HEK293 (cell line): ENCODE measurements at regions of chr10 and their contacts with region 1.

Region 1: GRCh38 chr10:122267849-122268737 is 3.0 kb upstream of the BTBD16 start:
- H3K4me3 ChIP-seq: no peak overlapping the region
- H3K27ac ChIP-seq: no peak overlapping the region
- H3K4me1 ChIP-seq: no peaks in the 10 kb centered on the region
- CTCF ChIP-seq: peak; percentile 75

Region 2: DNA sequence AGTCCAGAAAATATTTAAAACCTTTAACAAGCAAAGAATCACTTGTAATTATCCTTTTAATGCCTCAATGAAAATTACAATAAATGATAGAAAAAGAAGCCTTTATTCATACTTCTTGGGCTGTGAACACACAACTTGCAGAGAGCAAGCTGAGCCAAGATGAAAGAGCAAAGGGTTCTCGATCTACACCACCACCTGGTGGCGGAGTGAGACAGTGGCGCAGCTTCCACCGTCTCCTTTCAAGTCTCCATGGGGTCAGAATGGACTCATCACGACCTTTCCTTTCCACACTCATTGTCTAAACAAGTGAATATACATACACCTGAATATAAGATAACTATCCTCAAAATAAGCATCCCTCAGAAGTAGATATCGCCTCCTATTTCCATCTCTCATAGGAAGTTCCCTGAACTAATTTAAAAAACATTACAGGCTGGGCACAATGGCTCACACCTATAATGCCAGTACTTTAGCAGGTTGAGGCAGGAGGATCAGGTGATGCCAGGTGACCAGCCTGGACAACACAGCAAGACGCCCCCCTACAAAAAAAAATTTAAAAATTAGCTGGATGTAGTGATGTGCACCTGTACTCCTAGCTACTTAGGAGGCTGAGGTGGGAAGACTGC is 381.0 kb before region 1 on chr10:
- CTCF ChIA-PET with region 1: no interaction called
- POLR2A ChIA-PET with region 1: no interaction called
- H3K4me3 ChIP-seq: no peak overlapping the region
- H3K27ac ChIP-seq: no peak overlapping the region
- H3K4me1 ChIP-seq: no peaks in the 10 kb centered on the region
- CTCF ChIP-seq: peak; percentile 43; the same call in 1 of the 2 replicates

Region 3: GRCh38 chr10:122051251-122051996 is 216.7 kb before region 1 on chr10:
- CTCF ChIA-PET with region 1: interaction called, 16 read pairs
- POLR2A ChIA-PET with region 1: no interaction called
- H3K4me3 ChIP-seq: no peak overlapping the region
- H3K27ac ChIP-seq: no peak overlapping the region
- H3K4me1 ChIP-seq: 0 out of 2 replicates have a peak, but pooled peaks cover under 1% of the 10 kb centered on the region
- CTCF ChIP-seq: no peak

Region 4: DNA sequence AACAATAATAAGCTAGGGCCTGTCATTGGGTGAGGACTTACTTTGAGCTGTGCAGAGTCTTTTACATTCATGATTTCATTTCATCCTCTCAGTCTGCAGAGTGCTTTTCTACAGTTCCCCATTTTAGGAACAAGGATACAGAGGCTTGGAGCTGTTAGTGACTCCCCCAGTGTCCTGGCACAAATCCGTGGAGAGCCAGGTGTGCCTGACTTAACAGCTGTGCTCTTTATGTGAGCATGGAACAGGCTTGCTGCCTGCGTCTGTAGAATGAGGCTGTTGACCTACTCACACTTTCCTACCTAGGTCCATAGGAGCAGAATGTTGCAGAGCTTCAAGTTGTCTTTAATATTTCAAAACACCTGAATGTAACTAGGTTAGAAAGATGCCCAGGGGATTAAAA is 47.4 kb before region 1 on chr10:
- CTCF ChIA-PET with region 1: interaction called, 10 read pairs
- POLR2A ChIA-PET with region 1: no interaction called
- H3K4me3 ChIP-seq: no peak overlapping the region
- H3K27ac ChIP-seq: no peak overlapping the region
- H3K4me1 ChIP-seq: no peaks in the 10 kb centered on the region
- CTCF ChIP-seq: no peak

Region 5: DNA sequence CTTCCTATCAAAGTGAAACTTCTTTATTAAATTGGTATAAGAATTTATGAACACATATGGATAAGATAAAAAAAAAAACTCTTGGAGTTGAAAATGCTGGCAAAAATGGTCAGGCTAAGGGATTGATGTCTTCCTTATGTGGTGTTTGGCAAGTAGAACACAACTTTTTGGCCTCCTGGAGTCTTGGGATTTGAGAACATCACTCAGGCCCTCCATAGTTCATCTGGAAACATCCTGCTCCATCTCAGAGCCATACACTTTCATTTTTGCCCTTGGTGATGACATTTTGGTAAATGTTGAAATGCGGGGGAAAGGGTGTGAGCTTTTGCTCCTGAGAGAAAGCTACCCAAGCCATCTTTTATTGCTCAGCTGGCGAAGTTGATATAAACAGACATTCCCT is 24.5 kb before region 1 on chr10:
- CTCF ChIA-PET with region 1: interaction called, 16 read pairs
- POLR2A ChIA-PET with region 1: no interaction called
- H3K4me3 ChIP-seq: no peak overlapping the region
- H3K27ac ChIP-seq: no peak overlapping the region
- H3K4me1 ChIP-seq: no peaks in the 10 kb centered on the region
- CTCF ChIP-seq: no peak

Region 6: GRCh38 chr10:122279725-122280141 is 11.6 kb after region 1 on chr10:
- CTCF ChIA-PET with region 1: interaction called, 19 read pairs
- POLR2A ChIA-PET with region 1: no interaction called
- H3K4me3 ChIP-seq: no peak overlapping the region
- H3K27ac ChIP-seq: no peak overlapping the region
- H3K4me1 ChIP-seq: no peaks in the 10 kb centered on the region
- CTCF ChIP-seq: peak; percentile 73

Region 7: DNA sequence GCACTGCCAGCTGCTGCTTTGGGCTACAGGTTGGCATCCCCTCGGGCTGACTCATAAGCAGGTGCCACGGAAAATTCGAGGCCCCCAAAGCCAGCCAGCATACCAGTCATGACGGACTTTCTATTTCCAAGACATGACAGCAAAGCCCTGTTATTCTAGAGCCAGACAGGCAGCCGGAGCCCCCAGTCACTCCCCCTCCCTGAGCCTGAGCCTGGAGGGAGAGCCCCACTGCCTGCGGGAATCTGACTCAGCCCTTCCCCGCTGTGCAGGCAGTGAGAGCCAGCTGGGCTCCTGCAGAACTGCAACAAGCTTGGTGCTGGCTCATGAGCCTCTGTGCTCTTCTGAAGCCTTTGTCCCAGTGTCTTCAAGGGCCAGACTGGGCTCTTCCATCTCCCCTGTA is 18.8 kb after region 1 on chr10:
- CTCF ChIA-PET with region 1: interaction called, 19 read pairs
- POLR2A ChIA-PET with region 1: no interaction called
- H3K4me3 ChIP-seq: no peak overlapping the region
- H3K27ac ChIP-seq: no peak overlapping the region
- H3K4me1 ChIP-seq: no peaks in the 10 kb centered on the region
- CTCF ChIP-seq: no peak

Region 8: GRCh38 chr10:122435212-122435827 is 167.2 kb after region 1 on chr10:
- CTCF ChIA-PET with region 1: interaction called, 14 read pairs
- POLR2A ChIA-PET with region 1: no interaction called
- H3K4me3 ChIP-seq: no peak overlapping the region
- H3K27ac ChIP-seq: no peak overlapping the region
- H3K4me1 ChIP-seq: no peaks in the 10 kb centered on the region
- CTCF ChIP-seq: 0 out of 2 replicates have a peak, but pooled peaks have one; percentile 15